K562 (cell line): ENCODE measurements at regions of chr10 and their contacts with region 1.

Region 1: DNA sequence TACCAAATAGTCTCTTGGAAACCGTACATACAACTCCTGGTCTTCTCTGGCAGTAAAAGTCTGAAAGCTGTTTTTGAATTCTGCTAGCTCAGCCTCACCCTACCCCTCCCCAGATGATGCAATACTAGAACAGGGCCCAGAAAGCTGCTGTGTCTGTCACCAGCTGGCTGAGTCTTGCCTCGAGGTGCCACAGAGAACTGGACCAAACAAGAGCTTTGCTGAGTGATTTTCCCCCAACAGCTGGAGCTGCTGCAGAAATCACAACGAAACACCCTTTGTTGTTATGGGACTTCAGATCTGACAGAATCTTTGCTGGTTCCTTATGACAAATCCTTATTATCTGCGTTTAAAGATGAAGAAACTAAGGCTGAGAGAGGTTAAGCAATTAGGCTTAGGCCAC is 134.1 kb downstream of the SPAG6 start:
- DNase-seq: peak in 2 of 4 experiments; percentile 13 to 38
- ATAC-seq: peak; percentile 90
- H3K4me3 ChIP-seq: no peak overlapping the region
- H3K27ac ChIP-seq: no peak overlapping the region
- H3K4me1 ChIP-seq: peaks cover 0 to 23% of the 10 kb centered on the region in 2 experiments; a peak in 3 of 5 replicates
- H3K27me3 ChIP-seq: no peaks in the 10 kb centered on the region
- CTCF ChIP-seq: no peak
- EP300 ChIP-seq: peak; percentile 60
- POLR2A ChIP-seq: no peak
- RAD21 ChIP-seq: peak; percentile 30 to 35; a peak in 3 of 4 replicates

Region 2: GRCh38 chr10:22491931-22492615 is 12.7 kb after region 1 on chr10:
- CTCF ChIA-PET with region 1: no interaction called
- POLR2A ChIA-PET with region 1: interaction called, 13 read pairs
- in situ Hi-C with region 1: no loop called
- intact Hi-C with region 1: no loop called
- DNase-seq: no peak
- ATAC-seq: no peak
- H3K4me3 ChIP-seq: no peak overlapping the region
- H3K27ac ChIP-seq: no peak overlapping the region
- H3K4me1 ChIP-seq: peaks cover 0 to 17% of the 10 kb centered on the region in 2 experiments; a peak in 2 of 5 replicates
- H3K27me3 ChIP-seq: peaks cover 0 to 4% of the 10 kb centered on the region in 2 experiments; a peak in 1 of 5 replicates
- CTCF ChIP-seq: no peak
- EP300 ChIP-seq: no peak
- POLR2A ChIP-seq: no peak
- RAD21 ChIP-seq: no peak